ENCODE measurements at regions of chr1 and their contacts with region 1.

Region 1: GRCh38 chr1:162854245-162854882 is 6.6 kb downstream of the CCDC190 start:
- DNase-seq: peak; percentile 66
- H3K4me3 ChIP-seq: no peak overlapping the region; a peak in 1 of 4 replicates
- H3K27ac ChIP-seq: peak overlapping the region; percentile 58 to 92; a peak in 3 of 4 replicates
- H3K4me1 ChIP-seq: peaks cover 8 to 43% of the 10 kb centered on the region in 2 experiments; a peak in 3 of 4 replicates
- H3K27me3 ChIP-seq: no peaks in the 10 kb centered on the region
- CTCF ChIP-seq: peak; percentile 94
- EP300 ChIP-seq: no peak
- RAD21 ChIP-seq: peak; percentile 85

Region 2: DNA sequence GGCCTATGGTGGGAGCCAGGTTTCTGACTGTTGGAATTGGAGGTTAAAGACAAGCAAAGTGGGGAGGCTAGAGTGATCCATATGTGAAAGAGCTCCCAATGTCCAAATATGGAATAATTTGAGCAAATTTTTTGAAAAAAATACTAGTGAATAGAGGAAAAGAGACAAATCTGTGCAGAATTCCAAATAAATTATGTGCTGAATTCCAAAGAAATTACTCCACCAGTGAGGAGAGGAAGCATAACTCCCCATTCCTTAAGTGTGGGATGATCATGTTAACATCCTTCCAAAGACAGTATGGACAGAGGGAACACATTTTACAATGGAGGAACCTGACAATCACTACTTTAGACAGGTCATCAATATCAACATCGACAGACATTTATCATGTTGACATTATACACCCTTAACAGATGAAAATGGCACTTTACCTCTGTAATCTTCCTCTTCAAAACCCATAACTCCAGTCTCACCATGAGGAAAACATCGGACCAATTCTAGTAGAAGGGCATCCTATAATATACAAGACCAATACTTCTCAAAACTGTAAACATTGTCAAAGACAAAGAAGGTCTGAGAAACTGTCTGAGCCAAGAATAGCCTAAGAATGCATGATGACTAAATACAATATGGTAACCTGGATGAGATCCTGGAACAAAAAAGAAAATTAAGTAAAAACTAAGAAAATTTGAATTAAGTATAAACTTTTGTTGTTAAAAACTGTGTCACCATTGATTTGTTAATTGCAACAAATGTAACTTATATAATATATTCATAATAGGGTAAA is 143.3 kb after region 1 on chr1:
- CTCF ChIA-PET with region 1: no interaction called
- POLR2A ChIA-PET with region 1: no interaction called
- DNase-seq: no peak
- H3K4me3 ChIP-seq: no peak overlapping the region
- H3K27ac ChIP-seq: peak overlapping the region in 1 of 2 experiments; percentile 82; a peak in 3 of 4 replicates
- H3K4me1 ChIP-seq: 0 out of 4 replicates have a peak, but pooled peaks cover 0 to 8% of the 10 kb centered on the region in 2 experiments
- H3K27me3 ChIP-seq: no peaks in the 10 kb centered on the region
- CTCF ChIP-seq: no peak
- EP300 ChIP-seq: no peak
- RAD21 ChIP-seq: no peak

Region 3: DNA sequence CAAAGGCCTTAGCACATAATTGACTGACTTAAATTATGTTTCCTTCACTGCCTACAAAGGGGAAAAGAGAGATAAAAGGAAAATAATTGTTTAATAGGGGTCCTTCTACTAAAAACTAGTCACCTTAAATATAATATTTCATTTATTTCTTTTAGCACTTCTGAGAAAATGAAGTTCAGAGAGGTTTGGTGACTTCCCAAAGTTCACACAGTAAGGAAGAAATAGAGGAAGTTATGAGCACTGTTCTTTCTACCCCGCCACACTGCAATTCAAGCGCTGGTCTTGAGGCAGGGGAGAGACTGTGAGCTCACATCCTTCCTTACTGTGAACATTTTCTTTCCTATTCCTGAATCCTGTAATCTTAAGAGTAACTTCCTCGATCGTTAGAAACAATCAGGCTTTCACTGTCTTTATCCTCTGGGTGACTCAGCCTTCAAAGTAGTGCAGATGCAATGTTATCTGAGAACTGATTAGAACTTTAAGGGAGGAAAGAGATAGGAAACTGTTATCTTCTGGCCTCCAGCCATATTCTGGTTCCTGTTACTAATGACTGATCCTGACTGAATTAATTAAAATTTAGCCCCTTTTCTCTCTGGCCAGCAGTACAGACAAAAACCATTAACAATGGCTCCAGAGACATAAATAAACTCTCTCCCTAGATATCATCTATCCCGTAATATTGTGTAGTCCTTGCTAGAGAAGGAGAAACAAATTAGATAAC is 341.5 kb after region 1 on chr1:
- CTCF ChIA-PET with region 1: interaction called, 11 read pairs
- POLR2A ChIA-PET with region 1: no interaction called
- DNase-seq: no peak
- H3K4me3 ChIP-seq: peak overlapping the region; percentile 47 to 62
- H3K27ac ChIP-seq: peak overlapping the region; percentile 79 to 99
- H3K4me1 ChIP-seq: peaks cover 5 to 56% of the 10 kb centered on the region in 2 experiments; a peak in 2 of 4 replicates
- H3K27me3 ChIP-seq: no peaks in the 10 kb centered on the region
- CTCF ChIP-seq: no peak
- EP300 ChIP-seq: peak; percentile 82 to 100
- RAD21 ChIP-seq: 0 out of 2 replicates have a peak, but pooled peaks have one; percentile 3

Measured in SK-N-SH (cell line).